ENCODE measurements at regions of chr1 and their contacts with region 1.

Region 1: GRCh38 chr1:229822026-229822425 is 196.0 kb downstream of the URB2 start:
- DNase-seq: no peak
- H3K4me3 ChIP-seq: no peak overlapping the region
- H3K27ac ChIP-seq: no peak overlapping the region
- H3K4me1 ChIP-seq: no peaks in the 10 kb centered on the region
- H3K27me3 ChIP-seq: no peaks in the 10 kb centered on the region
- CTCF ChIP-seq: no peak
- POLR2A ChIP-seq: no peak

Region 2: DNA sequence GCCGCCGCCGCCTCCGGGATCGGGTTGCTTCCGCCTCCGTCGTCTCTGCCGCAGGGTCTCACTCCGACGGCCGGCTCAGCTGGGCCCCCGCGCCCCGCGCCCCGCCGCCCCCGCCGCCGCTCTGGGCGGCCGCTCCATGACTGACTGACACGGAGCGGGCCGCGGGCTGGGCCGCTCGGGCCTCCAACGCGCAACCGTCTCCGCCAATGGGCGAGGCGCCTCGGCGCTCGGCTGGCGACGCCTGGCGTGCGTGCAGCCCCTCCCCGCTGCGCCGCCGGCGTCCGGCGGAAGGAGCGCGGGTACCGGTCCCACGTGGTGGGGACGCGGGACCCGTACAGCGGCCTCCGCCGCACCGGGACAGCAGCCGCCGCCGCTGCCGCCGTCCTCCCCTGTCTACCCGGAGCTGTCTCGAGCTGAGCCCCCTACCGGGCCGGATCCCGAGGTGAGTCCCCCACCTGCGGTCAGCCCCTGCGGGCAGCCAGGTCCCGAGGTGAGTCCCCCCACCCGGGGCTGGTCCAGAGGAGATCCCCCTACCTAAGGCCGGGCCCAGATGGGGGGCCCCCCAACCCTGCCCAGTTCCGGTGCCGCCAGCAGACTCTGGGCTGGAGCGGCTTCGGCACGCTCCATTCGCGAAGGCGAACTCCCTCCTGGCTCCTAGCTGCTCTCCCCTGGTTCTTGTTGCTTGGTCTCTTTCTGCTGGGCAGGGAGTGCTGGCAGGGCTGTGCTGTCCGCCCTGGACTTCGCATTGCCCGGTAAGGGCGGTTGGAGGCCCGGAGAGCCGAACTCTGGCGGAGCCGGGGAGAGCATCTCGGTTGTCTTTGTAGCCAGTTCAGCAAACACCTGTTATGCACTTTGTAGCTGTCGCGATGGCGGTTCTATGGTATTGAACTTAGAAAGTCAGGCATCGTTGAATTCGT is 195.9 kb before region 1 on chr1 and contains the starts of genes TAF5L and URB2:
- intact Hi-C with region 1: no loop called
- DNase-seq: peak; percentile 78 to 87
- H3K4me3 ChIP-seq: peak within 1 kb of the TSS; percentile 81 to 97
- H3K27ac ChIP-seq: peak within 1 kb of the TSS; percentile 94 to 96
- H3K4me1 ChIP-seq: peaks cover 9 to 15% of the 10 kb centered on the region in 2 donors
- H3K27me3 ChIP-seq: no peaks in the 10 kb centered on the region
- CTCF ChIP-seq: peak in 2 of 4 experiments; percentile 11 to 44
- POLR2A ChIP-seq: peak in 1 of 2 donors; percentile 52
- total RNA-seq, gene TAF5L: 0.88 to 22.2 (median 9.2) TPM
- total RNA-seq, gene URB2: 2.3 to 17.8 (median 8.6) TPM

Region 3: GRCh38 chr1:229887043-229887822 is 65.2 kb after region 1 on chr1:
- intact Hi-C with region 1: no loop called
- DNase-seq: no peak
- H3K4me3 ChIP-seq: no peak overlapping the region
- H3K27ac ChIP-seq: no peak overlapping the region
- H3K4me1 ChIP-seq: no peaks in the 10 kb centered on the region
- H3K27me3 ChIP-seq: no peaks in the 10 kb centered on the region
- CTCF ChIP-seq: no peak
- POLR2A ChIP-seq: no peak

Region 4: DNA sequence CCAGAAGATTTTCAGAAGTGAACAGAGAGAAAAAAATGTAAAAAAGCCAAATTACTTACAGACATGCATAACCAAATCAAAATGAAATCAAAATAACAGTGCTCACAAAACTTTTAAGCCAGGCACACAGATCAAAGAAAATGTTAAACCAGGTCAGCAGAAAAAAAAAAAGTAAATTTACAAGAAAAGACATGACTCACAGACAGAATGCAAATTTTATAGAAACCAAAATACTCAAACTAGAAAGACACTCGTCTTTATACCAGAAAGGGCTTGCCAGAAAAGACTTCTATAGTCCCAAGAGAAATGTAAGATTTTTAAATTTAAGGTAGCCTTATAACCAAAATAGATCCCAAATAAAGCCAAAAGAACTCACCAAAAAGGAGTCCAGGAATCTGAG is 733.8 kb after region 1 on chr1:
- intact Hi-C with region 1: loop called (anchors 5 kb)
- DNase-seq: no peak
- H3K4me3 ChIP-seq: no peak overlapping the region
- H3K27ac ChIP-seq: no peak overlapping the region
- H3K4me1 ChIP-seq: no peaks in the 10 kb centered on the region
- H3K27me3 ChIP-seq: no peaks in the 10 kb centered on the region
- CTCF ChIP-seq: no peak
- POLR2A ChIP-seq: no peak

Measured in uterus (tissue), 4 donors.